Activated CD4-positive, alpha-beta T cell treated with anti-CD3 and anti-CD28 coated beads, Interleukin-2, amount 10 ng/mL, durations not matched to agents 24 days and 14 days (primary cell): ENCODE measurements at regions of chrX and their contacts with region 1.

Region 1: GRCh38 chrX:39859991-39860861 is 237.5 kb downstream of the BCOR start:
- DNase-seq: peak; percentile 92
- H3K4me3 Mint-ChIP-seq: peak overlapping the region; percentile 69
- H3K27ac Mint-ChIP-seq: peak overlapping the region; percentile 99
- H3K4me1 Mint-ChIP-seq: peaks cover 34% of the 10 kb centered on the region
- H3K27me3 Mint-ChIP-seq: no peaks in the 10 kb centered on the region

Region 2: GRCh38 chrX:38627683-38628082 is 1232.5 kb before region 1 on chrX:
- intact Hi-C with region 1: no loop called
- DNase-seq: peak; percentile 58
- H3K4me3 Mint-ChIP-seq: no peak overlapping the region
- H3K27ac Mint-ChIP-seq: no peak overlapping the region
- H3K4me1 Mint-ChIP-seq: peaks cover 4% of the 10 kb centered on the region
- H3K27me3 Mint-ChIP-seq: no peaks in the 10 kb centered on the region

Region 3: GRCh38 chrX:39336671-39337311 is 523.4 kb before region 1 on chrX:
- intact Hi-C with region 1: loop called (anchors 10 kb)
- DNase-seq: peak; percentile 78
- H3K4me3 Mint-ChIP-seq: peak overlapping the region; percentile 55
- H3K27ac Mint-ChIP-seq: peak overlapping the region; percentile 95
- H3K4me1 Mint-ChIP-seq: peaks cover 34% of the 10 kb centered on the region
- H3K27me3 Mint-ChIP-seq: no peaks in the 10 kb centered on the region

Region 4: DNA sequence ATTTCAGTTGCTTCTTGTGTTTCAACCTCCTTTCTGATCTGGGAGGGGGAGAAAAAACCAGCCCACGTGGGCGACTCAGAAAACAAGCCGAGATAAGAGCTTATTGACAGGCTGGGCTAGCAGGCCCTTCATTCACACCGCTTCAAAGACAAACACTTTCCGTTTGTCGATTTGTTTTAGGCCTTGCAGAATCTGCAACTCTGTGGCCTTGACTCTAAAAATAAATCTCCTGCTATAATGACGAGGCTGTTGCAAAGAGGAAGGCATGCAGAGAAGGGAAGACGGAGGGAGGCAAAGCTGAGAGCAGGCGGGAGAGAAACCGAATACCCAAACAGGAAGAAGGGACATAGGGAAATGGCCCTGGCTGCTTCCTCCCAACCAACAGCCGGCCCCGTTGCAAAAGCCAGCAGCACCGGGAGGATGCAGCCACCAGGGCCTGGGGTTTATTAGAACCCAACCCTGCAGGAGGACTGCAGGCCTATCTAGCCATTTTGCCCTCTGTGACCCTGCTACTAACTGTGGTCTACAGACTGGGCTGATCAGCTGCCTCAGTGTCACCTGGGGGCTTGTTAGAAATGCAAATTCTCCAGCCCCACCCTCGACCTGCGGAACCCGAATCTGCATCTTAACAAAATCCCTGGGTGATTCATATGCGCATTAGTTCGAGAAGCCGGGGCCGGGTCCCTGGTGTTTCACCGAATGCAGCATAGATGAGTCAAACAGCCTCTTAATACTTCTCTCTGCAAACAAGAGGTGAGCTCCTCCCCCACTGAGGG is 88.0 kb before region 1 on chrX:
- intact Hi-C with region 1: loop called (anchors 1 kb)
- DNase-seq: peak; percentile 81
- H3K4me3 Mint-ChIP-seq: peak overlapping the region; percentile 82
- H3K27ac Mint-ChIP-seq: peak overlapping the region; percentile 99
- H3K4me1 Mint-ChIP-seq: peaks cover 37% of the 10 kb centered on the region
- H3K27me3 Mint-ChIP-seq: no peaks in the 10 kb centered on the region

Region 5: DNA sequence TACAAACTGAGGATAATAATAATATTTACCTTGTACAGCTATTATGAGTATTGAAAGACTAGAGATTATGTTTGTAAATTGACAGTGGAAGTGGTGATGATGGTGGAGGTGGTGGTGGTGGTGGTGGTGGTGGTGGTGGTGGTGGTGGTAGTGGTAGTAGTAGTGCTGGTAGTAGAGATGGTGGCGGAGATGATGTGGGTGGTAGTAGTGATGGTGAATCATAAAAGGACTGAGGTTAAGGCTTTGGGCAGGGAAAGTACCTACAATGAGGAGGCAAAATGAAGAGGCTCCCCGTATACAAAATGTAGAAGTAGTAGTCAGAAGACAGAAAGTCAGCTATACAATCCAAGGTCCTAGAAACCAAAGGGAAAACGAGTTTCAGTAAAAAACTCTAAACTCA is 23.4 kb after region 1 on chrX:
- intact Hi-C with region 1: loop called (anchors 1 kb)
- DNase-seq: peak; percentile 68
- H3K4me3 Mint-ChIP-seq: peak overlapping the region; percentile 13
- H3K27ac Mint-ChIP-seq: peak overlapping the region; percentile 79
- H3K4me1 Mint-ChIP-seq: peaks cover 17% of the 10 kb centered on the region
- H3K27me3 Mint-ChIP-seq: peaks cover 4% of the 10 kb centered on the region

Region 6: DNA sequence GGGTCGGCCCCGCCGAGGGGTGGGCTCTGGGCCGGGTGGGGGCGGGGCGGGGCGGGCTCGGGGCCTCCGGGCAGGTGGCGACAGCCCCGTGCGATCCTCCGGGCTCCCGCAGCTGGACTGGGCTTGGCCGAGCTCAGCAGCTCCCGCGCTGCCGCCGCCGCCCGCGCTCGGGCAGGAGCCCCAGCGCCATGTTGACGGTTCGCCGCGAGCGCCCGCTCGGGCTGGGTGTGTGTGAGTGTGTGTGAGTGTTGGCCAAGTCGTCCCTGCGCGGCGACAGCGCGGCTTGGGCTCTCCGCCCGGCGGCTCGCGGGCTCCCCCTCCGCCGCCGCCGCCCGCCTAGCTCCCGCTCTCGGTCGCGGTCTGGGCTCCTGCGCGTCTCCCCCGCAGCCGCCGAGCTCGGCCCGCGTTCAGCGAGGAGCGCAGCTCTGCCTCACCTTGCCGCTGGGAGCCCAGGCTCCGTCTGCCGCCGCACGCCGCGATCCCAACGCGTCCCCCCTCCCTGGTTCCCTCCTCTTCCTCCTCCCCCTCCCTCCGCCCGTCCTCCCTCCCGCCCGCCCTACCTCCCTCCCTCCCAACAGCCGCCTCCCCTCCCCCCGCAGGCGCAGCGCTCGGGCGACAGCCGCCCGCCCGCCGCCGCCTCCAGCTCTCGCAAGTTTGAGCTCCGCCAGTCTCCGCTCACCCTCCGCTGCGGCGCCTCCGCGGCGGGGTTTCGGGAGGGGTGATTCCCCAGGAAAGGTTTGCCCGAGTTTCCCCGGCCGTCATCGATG is 237.5 kb after region 1 on chrX and contains the start of gene BCOR:
- intact Hi-C with region 1: loop called (anchors 1 kb)
- DNase-seq: peak; percentile 90
- H3K4me3 Mint-ChIP-seq: peak within 1 kb of the TSS; percentile 97
- H3K27ac Mint-ChIP-seq: peak within 1 kb of the TSS; percentile 92
- H3K4me1 Mint-ChIP-seq: peaks cover 25% of the 10 kb centered on the region
- H3K27me3 Mint-ChIP-seq: no peaks in the 10 kb centered on the region
- total RNA-seq, gene BCOR: 61.0 and 64.5 TPM in 2 replicates